Activated CD4-positive, alpha-beta T cell treated with anti-CD3 and anti-CD28 coated beads, Interleukin-2, amount 10 ng/mL, durations not matched to agents 7 days and 5 days (primary cell): ENCODE measurements at regions of chr1 and their contacts with region 1.

Region 1: GRCh38 chr1:3775490-3776230 is 3.1 kb downstream of the SMIM1 start:
- DNase-seq: peak; percentile 53
- H3K4me3 Mint-ChIP-seq: no peak overlapping the region
- H3K27ac Mint-ChIP-seq: no peak overlapping the region
- H3K4me1 Mint-ChIP-seq: peaks cover 7% of the 10 kb centered on the region
- H3K27me3 Mint-ChIP-seq: no peaks in the 10 kb centered on the region

Region 2: DNA sequence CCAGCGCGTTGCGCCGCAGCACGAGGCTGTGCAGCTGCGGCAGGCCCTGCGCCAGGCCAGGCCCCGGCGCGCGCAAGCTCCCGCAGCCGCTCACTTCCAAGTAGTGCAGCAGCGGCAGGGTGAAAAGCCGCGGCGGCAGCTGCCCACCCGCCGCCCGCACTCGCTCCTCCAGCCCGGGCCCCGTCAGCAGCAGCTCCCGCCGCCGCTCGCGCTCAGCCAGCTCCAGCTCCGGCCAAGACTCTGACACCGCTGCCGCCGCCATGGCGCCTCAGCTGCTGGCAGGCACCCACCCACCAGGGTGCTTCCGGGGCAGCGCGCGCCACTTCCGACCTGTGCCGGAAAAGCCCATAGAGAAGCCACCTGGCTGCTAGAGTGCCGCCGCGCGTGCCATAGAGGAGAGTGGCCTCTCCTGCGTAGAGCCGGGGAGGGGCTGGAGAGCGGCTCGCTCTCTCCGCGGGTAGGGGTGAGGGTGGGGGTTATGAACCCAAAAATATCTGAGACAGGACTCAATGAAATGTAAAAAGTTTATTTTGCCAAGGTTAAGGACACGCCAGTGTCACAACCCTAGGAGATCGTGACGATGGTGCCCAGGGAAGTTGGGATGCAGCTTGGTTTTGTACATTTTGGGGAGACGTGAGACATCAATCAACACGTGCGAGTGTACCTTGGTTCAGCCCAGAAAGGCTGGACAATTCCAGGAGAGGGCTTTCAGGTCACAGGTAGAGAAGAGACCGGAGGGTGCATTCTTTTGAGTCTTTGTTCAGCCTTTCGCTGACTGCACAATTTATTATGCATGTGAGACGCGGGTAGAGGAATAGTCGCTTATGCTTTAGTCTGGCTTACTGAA is 20.8 kb after region 1 on chr1 and contains the start of gene LRRC47:
- CTCF ChIA-PET with region 1: interaction called, 29 read pairs
- POLR2A ChIA-PET with region 1: no interaction called
- DNase-seq: peak; percentile 96
- H3K4me3 Mint-ChIP-seq: peak within 1 kb of the TSS; percentile 88
- H3K27ac Mint-ChIP-seq: peak within 1 kb of the TSS; percentile 96
- H3K4me1 Mint-ChIP-seq: peaks cover 48% of the 10 kb centered on the region
- H3K27me3 Mint-ChIP-seq: peaks cover 2% of the 10 kb centered on the region
- total RNA-seq, gene LRRC47: 37.7 to 42.7 TPM

Region 3: GRCh38 chr1:3842912-3843311 is 67.3 kb after region 1 on chr1:
- CTCF ChIA-PET with region 1: no interaction called
- POLR2A ChIA-PET with region 1: no interaction called
- DNase-seq: no peak
- H3K4me3 Mint-ChIP-seq: no peak overlapping the region
- H3K27ac Mint-ChIP-seq: no peak overlapping the region
- H3K4me1 Mint-ChIP-seq: no peaks in the 10 kb centered on the region
- H3K27me3 Mint-ChIP-seq: no peaks in the 10 kb centered on the region

Region 4: GRCh38 chr1:3959361-3959760 is 183.7 kb after region 1 on chr1:
- CTCF ChIA-PET with region 1: no interaction called
- POLR2A ChIA-PET with region 1: no interaction called
- DNase-seq: no peak
- H3K4me3 Mint-ChIP-seq: no peak overlapping the region
- H3K27ac Mint-ChIP-seq: no peak overlapping the region
- H3K4me1 Mint-ChIP-seq: no peaks in the 10 kb centered on the region
- H3K27me3 Mint-ChIP-seq: no peaks in the 10 kb centered on the region